ENCODE measurements at regions of chr6 and their contacts with region 1.

Region 1: GRCh38 chr6:28104392-28105244 is 19.8 kb upstream of the ZSCAN16 start:
- DNase-seq: peak; percentile 76 to 93 (median 85)
- ATAC-seq: peak; percentile 99
- H3K4me3 ChIP-seq: peak overlapping the region; percentile 69 to 73
- H3K4me3 Mint-ChIP-seq: peak overlapping the region; percentile 90
- H3K27ac ChIP-seq: peak overlapping the region; percentile 53 to 83
- H3K27ac Mint-ChIP-seq: peak overlapping the region; percentile 89
- H3K4me1 ChIP-seq: peaks cover 5% of the 10 kb centered on the region
- H3K4me1 Mint-ChIP-seq: peaks cover 11% of the 10 kb centered on the region
- H3K27me3 ChIP-seq: no peaks in the 10 kb centered on the region
- H3K27me3 Mint-ChIP-seq: peaks cover under 1% of the 10 kb centered on the region
- CTCF ChIP-seq: peak; percentile 60

Region 2: DNA sequence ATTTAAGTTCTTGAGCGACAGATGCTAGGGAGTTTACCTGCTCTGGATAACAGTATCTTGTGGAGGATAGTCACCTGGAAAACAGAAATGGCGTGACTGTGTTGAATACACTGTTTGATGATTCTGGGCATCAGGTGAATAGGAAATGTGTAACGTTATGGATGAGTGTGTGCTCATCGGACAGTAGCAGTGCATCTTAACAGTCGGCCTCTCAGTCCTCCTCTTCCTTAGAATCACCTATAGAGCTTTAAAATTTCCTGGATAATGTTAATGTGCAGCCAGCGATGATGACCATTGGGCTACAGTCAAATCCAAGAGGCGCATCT is 410.1 kb before region 1 on chr6:
- CTCF ChIA-PET with region 1: no interaction called
- POLR2A ChIA-PET with region 1: no interaction called
- intact Hi-C with region 1: loop called in 1 of 2 experiments (anchors 5 kb)
- DNase-seq: no peak
- ATAC-seq: no peak
- H3K4me3 ChIP-seq: peak overlapping the region; percentile 74 to 88
- H3K4me3 Mint-ChIP-seq: peak overlapping the region; percentile 97
- H3K27ac ChIP-seq: no peak overlapping the region
- H3K27ac Mint-ChIP-seq: peak overlapping the region; percentile 75
- H3K4me1 ChIP-seq: peaks cover 5% of the 10 kb centered on the region
- H3K4me1 Mint-ChIP-seq: peaks cover 29% of the 10 kb centered on the region
- H3K27me3 ChIP-seq: no peaks in the 10 kb centered on the region
- H3K27me3 Mint-ChIP-seq: no peaks in the 10 kb centered on the region
- CTCF ChIP-seq: no peak

Region 3: DNA sequence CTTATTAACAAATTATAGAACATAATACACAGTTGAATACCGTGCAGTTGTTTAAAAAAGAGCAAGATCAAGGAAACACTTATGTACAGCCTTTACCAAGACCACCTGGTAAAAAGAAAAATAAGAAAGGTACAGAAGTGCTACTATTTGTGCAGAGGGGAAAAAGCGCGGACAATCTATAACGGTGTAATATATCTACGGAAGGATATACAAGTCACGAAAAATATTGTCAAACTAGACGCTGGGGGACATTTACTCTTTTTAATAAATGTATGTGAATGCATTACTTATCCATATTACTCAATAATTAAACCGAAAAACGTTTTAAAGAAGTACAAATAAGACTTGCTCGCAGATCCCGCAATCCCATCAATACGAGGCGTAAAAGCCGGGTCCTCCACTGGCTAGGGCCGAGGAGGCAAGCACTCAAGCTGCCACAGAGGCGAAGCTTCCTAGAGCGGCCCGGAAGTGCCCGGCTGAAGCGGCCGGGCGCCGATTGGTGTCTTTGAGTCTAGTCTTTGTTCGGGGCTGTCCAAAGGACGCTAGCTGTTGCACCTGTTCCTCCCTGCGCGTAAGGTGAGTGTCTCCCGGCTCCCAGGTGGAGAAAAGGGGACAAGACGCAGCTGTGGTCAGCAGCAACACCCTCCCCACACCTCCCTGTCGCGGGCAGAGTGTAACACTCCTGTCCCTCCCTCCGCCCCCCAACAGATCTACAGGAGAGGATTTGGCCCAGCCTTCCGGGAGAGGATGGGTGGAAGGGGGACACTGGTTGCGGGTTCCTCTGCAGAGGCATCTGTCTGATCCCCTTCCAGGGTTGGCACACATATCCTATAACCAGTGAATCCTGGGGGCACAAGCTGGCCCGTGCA is 19.7 kb after region 1 on chr6 and contains the start of gene ZSCAN16:
- CTCF ChIA-PET with region 1: interaction called, 4 read pairs
- POLR2A ChIA-PET with region 1: interaction called, 8 read pairs
- intact Hi-C with region 1: loop called (anchors 1 to 2 kb)
- DNase-seq: peak; percentile 59 to 86 (median 76)
- ATAC-seq: peak; percentile 72
- H3K4me3 ChIP-seq: peak within 1 kb of the TSS; percentile 79 to 86
- H3K4me3 Mint-ChIP-seq: peak within 1 kb of the TSS; percentile 95
- H3K27ac ChIP-seq: peak within 1 kb of the TSS; percentile 76 to 89
- H3K27ac Mint-ChIP-seq: peak within 1 kb of the TSS; percentile 97
- H3K4me1 ChIP-seq: peaks cover 11% of the 10 kb centered on the region
- H3K4me1 Mint-ChIP-seq: peaks cover 42% of the 10 kb centered on the region
- H3K27me3 ChIP-seq: no peaks in the 10 kb centered on the region
- H3K27me3 Mint-ChIP-seq: no peaks in the 10 kb centered on the region
- CTCF ChIP-seq: no peak
- total RNA-seq, gene ZSCAN16: 5.2 to 6.0 TPM

Region 4: DNA sequence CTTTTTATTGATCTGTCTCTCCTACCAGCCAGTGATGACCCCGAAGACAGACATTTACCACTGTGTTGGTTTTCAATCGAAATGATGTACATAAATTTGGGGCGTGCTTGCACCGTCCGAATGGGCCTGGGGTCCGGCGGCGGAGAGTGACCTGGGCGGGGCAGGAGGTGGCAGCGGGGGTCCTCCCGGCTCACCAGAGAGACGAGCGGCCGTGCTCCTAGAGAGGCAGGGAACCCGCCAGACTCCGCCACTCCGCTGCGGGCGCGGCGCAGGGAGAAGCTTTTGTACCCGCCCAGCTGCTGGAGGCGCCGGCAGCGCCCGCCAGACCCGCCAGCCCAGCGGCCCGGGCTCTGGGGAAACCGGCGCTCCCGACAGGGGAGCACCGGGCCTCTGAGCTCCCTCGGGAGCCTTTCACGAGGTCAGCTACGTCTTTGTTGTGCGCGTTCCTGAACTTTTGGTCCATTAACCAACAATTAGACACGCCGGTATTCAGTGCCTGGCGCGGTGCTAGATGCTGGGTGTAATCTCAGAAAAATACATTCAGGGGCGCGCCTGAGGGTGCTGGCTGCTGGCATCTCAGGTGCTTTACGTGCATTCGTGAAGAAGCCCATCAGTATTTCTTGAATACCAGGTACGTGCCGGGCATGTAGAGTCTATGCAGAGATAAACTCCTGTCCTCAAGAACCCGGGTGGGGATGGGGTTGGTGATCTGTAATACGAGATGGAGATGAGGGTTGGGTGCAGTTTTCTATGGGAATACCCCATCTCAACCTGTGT is 176.9 kb after region 1 on chr6 and contains the start of gene PGBD1:
- CTCF ChIA-PET with region 1: no interaction called
- POLR2A ChIA-PET with region 1: no interaction called
- intact Hi-C with region 1: no loop called
- DNase-seq: peak; percentile 3 to 69 (median 48)
- ATAC-seq: peak; percentile 80
- H3K4me3 ChIP-seq: peak within 1 kb of the TSS; percentile 51 to 52
- H3K4me3 Mint-ChIP-seq: peak within 1 kb of the TSS; percentile 83
- H3K27ac ChIP-seq: no peak within 1 kb of the TSS
- H3K27ac Mint-ChIP-seq: no peak within 1 kb of the TSS
- H3K4me1 ChIP-seq: peaks cover 9% of the 10 kb centered on the region
- H3K4me1 Mint-ChIP-seq: peaks cover 12% of the 10 kb centered on the region
- H3K27me3 ChIP-seq: no peaks in the 10 kb centered on the region
- H3K27me3 Mint-ChIP-seq: peaks cover 14% of the 10 kb centered on the region
- CTCF ChIP-seq: no peak
- total RNA-seq, gene PGBD1: 0.75 to 0.95 TPM

Measured in CD8-positive, alpha-beta T cell (primary cell).